CD4-positive, alpha-beta T cell (primary cell): ENCODE measurements at regions of chr14 and their contacts with region 1.

Region 1: GRCh38 chr14:93959239-93960107 is 16.9 kb downstream of the ASB2 start:
- DNase-seq: peak; percentile 77 to 98 (median 88)
- ATAC-seq: peak; percentile 79
- H3K4me3 ChIP-seq: peak overlapping the region; percentile 24
- H3K4me3 Mint-ChIP-seq: peak overlapping the region; percentile 76
- H3K27ac ChIP-seq: peak overlapping the region; percentile 42 to 71
- H3K27ac Mint-ChIP-seq: peak overlapping the region; percentile 91
- H3K4me1 ChIP-seq: peaks cover 100% of the 10 kb centered on the region
- H3K4me1 Mint-ChIP-seq: peaks cover 96% of the 10 kb centered on the region
- H3K27me3 ChIP-seq: no peaks in the 10 kb centered on the region
- H3K27me3 Mint-ChIP-seq: no peaks in the 10 kb centered on the region
- CTCF ChIP-seq: no peak

Region 2: DNA sequence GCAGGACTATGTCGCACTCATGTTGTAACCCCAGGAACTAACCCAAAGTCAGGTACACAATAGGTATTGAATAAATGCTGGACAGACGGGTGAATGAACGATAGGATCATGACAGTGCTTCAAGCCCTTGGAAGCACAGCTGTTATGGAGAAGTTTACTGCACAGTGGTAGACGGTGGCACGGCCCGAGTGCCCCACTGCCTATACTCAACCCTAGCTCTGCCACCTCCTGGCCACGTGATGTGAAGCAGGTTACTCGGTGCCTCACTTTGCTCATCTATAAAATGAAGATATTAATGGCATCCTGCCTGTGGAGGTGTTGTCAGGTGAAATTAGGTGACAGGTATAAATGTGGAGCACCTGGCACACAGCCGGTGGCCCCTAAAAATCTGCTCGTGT is 11.1 kb after region 1 on chr14:
- CTCF ChIA-PET with region 1: interaction called, 9 read pairs
- POLR2A ChIA-PET with region 1: interaction called, 28 read pairs
- intact Hi-C with region 1: loop called in 1 of 2 experiments (anchors 1 kb)
- DNase-seq: peak; percentile 61 to 87 (median 70)
- ATAC-seq: peak; percentile 95
- H3K4me3 ChIP-seq: peak overlapping the region; percentile 59
- H3K4me3 Mint-ChIP-seq: peak overlapping the region; percentile 93
- H3K27ac ChIP-seq: no peak overlapping the region
- H3K27ac Mint-ChIP-seq: peak overlapping the region; percentile 28
- H3K4me1 ChIP-seq: peaks cover 75% of the 10 kb centered on the region
- H3K4me1 Mint-ChIP-seq: peaks cover 32% of the 10 kb centered on the region
- H3K27me3 ChIP-seq: no peaks in the 10 kb centered on the region
- H3K27me3 Mint-ChIP-seq: no peaks in the 10 kb centered on the region
- CTCF ChIP-seq: peak; percentile 72

Region 3: DNA sequence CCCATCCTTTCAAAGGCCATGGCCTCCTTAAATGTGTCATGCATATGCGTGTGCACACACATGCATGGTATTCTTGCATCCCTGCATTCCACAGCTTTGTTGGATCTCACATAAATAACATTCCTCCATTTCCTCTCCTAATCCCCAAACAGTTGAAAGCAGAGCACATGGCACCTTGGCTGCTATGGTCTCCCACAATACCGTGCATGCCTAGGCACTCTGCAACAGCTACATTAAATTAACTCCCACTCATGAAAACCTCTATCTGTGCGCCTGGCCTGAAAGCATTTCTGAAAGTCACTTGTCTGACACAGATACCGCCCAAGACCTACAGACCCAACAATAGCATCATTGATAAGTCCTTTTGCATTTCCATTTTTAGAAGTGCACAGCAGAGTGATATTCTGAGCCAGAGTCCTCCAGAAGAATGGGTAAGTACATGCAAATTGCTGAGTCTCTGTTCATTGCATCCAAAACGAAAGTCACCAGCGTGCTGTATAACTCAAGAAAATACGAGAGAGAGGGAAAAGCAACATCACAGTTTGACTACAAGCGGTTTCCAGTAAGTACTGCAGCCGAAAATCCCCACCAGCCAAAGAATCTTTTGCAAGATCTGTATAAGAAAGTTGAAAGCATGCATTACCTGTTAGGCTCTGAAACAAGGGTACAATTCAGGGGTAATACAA is 16.5 kb after region 1 on chr14:
- CTCF ChIA-PET with region 1: interaction called, 9 read pairs
- POLR2A ChIA-PET with region 1: interaction called, 77 read pairs
- intact Hi-C with region 1: loop called (anchors 2 kb)
- DNase-seq: peak in 2 of 14 experiments; percentile 48 to 52
- ATAC-seq: no peak
- H3K4me3 ChIP-seq: peak overlapping the region; percentile 17
- H3K4me3 Mint-ChIP-seq: peak overlapping the region; percentile 8
- H3K27ac ChIP-seq: no peak overlapping the region
- H3K27ac Mint-ChIP-seq: peak overlapping the region; percentile 66
- H3K4me1 ChIP-seq: peaks cover 88% of the 10 kb centered on the region
- H3K4me1 Mint-ChIP-seq: peaks cover 67% of the 10 kb centered on the region
- H3K27me3 ChIP-seq: no peaks in the 10 kb centered on the region
- H3K27me3 Mint-ChIP-seq: no peaks in the 10 kb centered on the region
- CTCF ChIP-seq: no peak